ENCODE measurements at regions of chr7 and their contacts with region 1.

Region 1: DNA sequence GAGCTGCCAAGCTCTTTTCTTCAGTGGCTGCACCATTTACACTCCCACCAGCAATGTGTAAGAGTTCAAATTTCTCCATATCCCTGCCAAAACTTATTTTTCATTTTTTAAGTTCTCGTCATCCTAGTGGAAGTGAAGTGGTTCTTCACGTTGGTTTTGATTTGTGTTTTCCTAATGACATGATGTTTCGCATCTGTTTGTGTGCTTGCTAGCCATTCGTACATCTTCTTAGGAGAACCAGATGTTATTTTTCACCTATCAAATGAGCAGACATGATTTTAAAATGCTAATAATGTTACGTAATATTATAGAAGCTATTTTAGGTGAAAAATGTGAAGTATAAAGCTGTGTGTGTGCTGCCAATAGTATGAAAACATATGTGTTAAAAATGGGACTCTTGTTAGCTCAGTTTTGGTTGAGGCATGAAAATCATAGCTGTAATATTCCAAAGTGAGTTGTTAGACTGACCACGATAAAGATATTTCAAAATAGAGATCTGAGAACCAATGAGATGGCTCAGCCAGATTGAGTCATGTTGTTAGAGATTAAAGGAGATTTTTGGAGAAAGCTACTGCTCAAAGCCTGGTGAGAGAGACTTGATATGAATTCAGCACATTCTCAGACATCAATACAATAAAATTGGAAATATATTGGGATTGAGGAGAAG is 25.9 kb upstream of the GALNT11 start:
- DNase-seq: no peak
- ATAC-seq: no peak
- H3K4me3 ChIP-seq: no peak overlapping the region
- H3K4me3 Mint-ChIP-seq: no peak overlapping the region
- H3K27ac ChIP-seq: no peak overlapping the region
- H3K27ac Mint-ChIP-seq: no peak overlapping the region
- H3K4me1 ChIP-seq: no peaks in the 10 kb centered on the region
- H3K4me1 Mint-ChIP-seq: no peaks in the 10 kb centered on the region
- H3K27me3 ChIP-seq: peaks cover 0 to 5% of the 10 kb centered on the region in 2 experiments
- H3K27me3 Mint-ChIP-seq: peaks cover 53% of the 10 kb centered on the region
- CTCF ChIP-seq: no peak

Region 2: GRCh38 chr7:151851145-151851751 is 148.3 kb before region 1 on chr7:
- CTCF ChIA-PET with region 1: no interaction called
- POLR2A ChIA-PET with region 1: no interaction called
- intact Hi-C with region 1: loop called in 1 of 2 experiments (anchors 10 kb)
- DNase-seq: peak in 3 of 14 experiments; percentile 20 to 74 (median 64)
- ATAC-seq: peak; percentile 48
- H3K4me3 ChIP-seq: peak overlapping the region; percentile 30
- H3K4me3 Mint-ChIP-seq: peak overlapping the region; percentile 39
- H3K27ac ChIP-seq: peak overlapping the region in 1 of 2 donors; percentile 56
- H3K27ac Mint-ChIP-seq: peak overlapping the region; percentile 14
- H3K4me1 ChIP-seq: peaks cover 32% of the 10 kb centered on the region
- H3K4me1 Mint-ChIP-seq: peaks cover 37% of the 10 kb centered on the region
- H3K27me3 ChIP-seq: no peaks in the 10 kb centered on the region
- H3K27me3 Mint-ChIP-seq: no peaks in the 10 kb centered on the region
- CTCF ChIP-seq: no peak